Heart left ventricle (tissue), 16 donors: ENCODE measurements at regions of chr2 and their contacts with region 1.

Region 1: GRCh38 chr2:191566344-191566743 is 111.6 kb upstream of the NABP1 start:
- DNase-seq: peak in 4 of 5 donors; percentile 34 to 52 (median 43)
- ATAC-seq: peak in 3 of 4 donors; percentile 49 to 73 (median 69)
- H3K4me3 ChIP-seq: no peak overlapping the region
- H3K27ac ChIP-seq: no peak overlapping the region
- H3K4me1 ChIP-seq: peaks cover 0 to 18% (median 0%) of the 10 kb centered on the region in 12 donors
- H3K27me3 ChIP-seq: peaks cover 0 to 5% (median under 1%) of the 10 kb centered on the region in 9 donors
- CTCF ChIP-seq: peak; percentile 54 to 84 (median 68)
- POLR2A ChIP-seq: no peak

Region 2: GRCh38 chr2:191677646-191678436 is 111.5 kb after region 1 on chr2 and contains the start of gene NABP1:
- intact Hi-C with region 1: loop called in 1 of 10 experiments (anchors 5 kb)
- DNase-seq: peak; percentile 99 to 100 (median 99)
- ATAC-seq: peak; percentile 98 to 100 (median 99)
- H3K4me3 ChIP-seq: peak within 1 kb of the TSS; percentile 50 to 84 (median 69)
- H3K27ac ChIP-seq: peak within 1 kb of the TSS; percentile 82 to 99 (median 92)
- H3K4me1 ChIP-seq: peaks cover 0 to 68% (median 5%) of the 10 kb centered on the region in 12 donors
- H3K27me3 ChIP-seq: no peaks in the 10 kb centered on the region
- CTCF ChIP-seq: no peak
- POLR2A ChIP-seq: peak; percentile 84 to 99
- total RNA-seq, gene NABP1: 1.5 to 36.3 (median 3.3) TPM

Region 3: DNA sequence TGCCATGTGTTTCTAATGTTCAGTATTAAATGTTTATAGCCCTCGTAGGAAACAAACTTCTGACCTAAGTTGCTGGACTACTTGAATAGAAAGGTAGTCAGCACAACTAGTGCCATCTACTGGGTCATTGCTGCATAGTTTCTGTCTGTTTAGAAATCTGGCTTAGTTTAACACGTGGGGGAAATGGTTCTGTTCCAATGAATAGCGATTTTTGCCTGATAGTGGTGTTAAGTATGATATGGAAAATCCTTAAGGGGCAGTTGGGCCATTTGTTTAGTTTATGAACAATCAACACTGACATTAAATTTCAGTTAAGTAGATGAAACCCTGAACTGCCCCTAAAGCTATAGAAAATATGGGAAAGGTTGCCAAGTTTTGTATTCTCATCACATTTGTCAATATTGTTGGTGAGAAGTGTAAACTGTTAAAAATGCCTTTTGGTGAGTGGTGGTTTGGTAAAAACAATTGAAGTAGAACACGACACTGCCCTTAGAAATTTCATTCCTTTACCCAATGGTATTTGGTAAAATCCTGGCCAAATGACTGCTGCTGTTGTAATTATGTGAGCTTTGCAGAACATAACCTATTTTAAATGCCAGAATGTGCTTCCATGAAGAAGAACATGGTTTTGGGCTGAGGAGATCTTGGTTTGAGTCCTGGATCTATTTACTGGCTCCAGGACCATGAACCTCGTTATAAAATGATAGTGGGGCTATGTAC is 124.8 kb after region 1 on chr2:
- intact Hi-C with region 1: loop called in 8 of 10 experiments (anchors 1 to 5 kb)
- DNase-seq: peak in 2 of 5 donors; percentile 30 to 35
- ATAC-seq: peak; percentile 64 to 84 (median 74)
- H3K4me3 ChIP-seq: no peak overlapping the region
- H3K27ac ChIP-seq: no peak overlapping the region
- H3K4me1 ChIP-seq: peaks cover 0 to 23% (median 4%) of the 10 kb centered on the region in 12 donors
- H3K27me3 ChIP-seq: peaks cover 0 to 6% (median 0%) of the 10 kb centered on the region in 9 donors
- CTCF ChIP-seq: peak; percentile 50 to 86 (median 72)
- POLR2A ChIP-seq: no peak

Region 4: DNA sequence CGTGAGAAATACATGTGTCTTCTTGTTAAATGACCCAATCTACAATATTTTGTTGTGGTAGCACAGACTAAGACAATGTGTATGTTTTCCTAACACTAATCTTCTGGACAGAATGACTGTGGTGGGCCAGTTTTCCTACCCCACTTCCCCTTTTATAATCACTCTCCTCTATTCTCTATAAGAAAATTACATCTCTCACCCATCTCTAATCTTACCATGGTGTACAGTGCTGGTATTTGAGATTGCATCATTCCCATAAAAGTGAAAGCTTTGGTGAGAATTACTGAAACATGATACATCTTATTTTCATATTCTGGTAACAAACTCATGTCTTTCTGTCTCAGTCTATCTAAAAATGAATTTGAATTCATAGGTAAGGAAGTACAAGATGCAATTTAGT is 240.1 kb after region 1 on chr2:
- intact Hi-C with region 1: loop called in 1 of 10 experiments (anchors 10 kb)
- DNase-seq: no peak
- ATAC-seq: no peak
- H3K4me3 ChIP-seq: no peak overlapping the region
- H3K27ac ChIP-seq: no peak overlapping the region
- H3K4me1 ChIP-seq: no peaks in the 10 kb centered on the region
- H3K27me3 ChIP-seq: no peaks in the 10 kb centered on the region
- CTCF ChIP-seq: no peak
- POLR2A ChIP-seq: no peak